ENCODE measurements at regions of chr3 and their contacts with region 1.

Region 1: DNA sequence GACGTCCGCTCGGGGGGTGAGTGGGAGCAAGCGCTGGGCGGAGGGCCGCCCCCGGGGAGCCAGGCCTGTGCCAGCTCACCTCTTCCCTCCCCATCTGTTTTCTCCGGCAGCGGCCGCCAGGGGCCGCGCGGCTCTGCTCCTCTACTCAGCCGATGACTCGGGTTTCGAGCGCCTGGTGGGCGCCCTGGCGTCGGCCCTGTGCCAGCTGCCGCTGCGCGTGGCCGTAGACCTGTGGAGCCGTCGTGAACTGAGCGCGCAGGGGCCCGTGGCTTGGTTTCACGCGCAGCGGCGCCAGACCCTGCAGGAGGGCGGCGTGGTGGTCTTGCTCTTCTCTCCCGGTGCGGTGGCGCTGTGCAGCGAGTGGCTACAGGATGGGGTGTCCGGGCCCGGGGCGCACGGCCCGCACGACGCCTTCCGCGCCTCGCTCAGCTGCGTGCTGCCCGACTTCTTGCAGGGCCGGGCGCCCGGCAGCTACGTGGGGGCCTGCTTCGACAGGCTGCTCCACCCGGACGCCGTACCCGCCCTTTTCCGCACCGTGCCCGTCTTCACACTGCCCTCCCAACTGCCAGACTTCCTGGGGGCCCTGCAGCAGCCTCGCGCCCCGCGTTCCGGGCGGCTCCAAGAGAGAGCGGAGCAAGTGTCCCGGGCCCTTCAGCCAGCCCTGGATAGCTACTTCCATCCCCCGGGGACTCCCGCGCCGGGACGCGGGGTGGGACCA is 632 bp upstream of the CRELD1 start:
- DNase-seq: peak; percentile 80 to 94 (median 86)
- ATAC-seq: peak; percentile 61 to 69
- H3K4me3 Mint-ChIP-seq: peak overlapping the region; percentile 94 to 99 (median 98)
- H3K27ac Mint-ChIP-seq: peak overlapping the region; percentile 96 to 100 (median 99)
- H3K4me1 Mint-ChIP-seq: peaks cover 24 to 53% (median 45%) of the 10 kb centered on the region in 4 donors
- H3K27me3 Mint-ChIP-seq: no peaks in the 10 kb centered on the region

Region 2: GRCh38 chr3:9792405-9793160 is 140.4 kb before region 1 on chr3 and contains the starts of genes ARPC4 and TADA3:
- POLR2A ChIA-PET with region 1: interaction called, 22 read pairs
- DNase-seq: peak; percentile 85 to 98 (median 89)
- ATAC-seq: peak; percentile 86 to 87
- H3K4me3 Mint-ChIP-seq: peak within 1 kb of the TSS; percentile 91 to 100 (median 96)
- H3K27ac Mint-ChIP-seq: peak within 1 kb of the TSS; percentile 95 to 100 (median 99)
- H3K4me1 Mint-ChIP-seq: peaks cover 36 to 78% (median 73%) of the 10 kb centered on the region in 4 donors
- H3K27me3 Mint-ChIP-seq: no peaks in the 10 kb centered on the region
- polyA plus RNA-seq, gene ARPC4: 201 to 229 (median 225) TPM
- polyA plus RNA-seq, gene TADA3: 38.2 to 51.2 (median 44.1) TPM

Region 3: GRCh38 chr3:9915254-9916141 is 17.5 kb before region 1 on chr3:
- POLR2A ChIA-PET with region 1: interaction called, 19 read pairs
- DNase-seq: peak in 5 of 10 donors; percentile 15 to 35 (median 26)
- ATAC-seq: peak; percentile 57 to 70
- H3K4me3 Mint-ChIP-seq: peak overlapping the region; percentile 67 to 88 (median 80)
- H3K27ac Mint-ChIP-seq: peak overlapping the region in 2 of 10 donors; percentile 18 to 62
- H3K4me1 Mint-ChIP-seq: peaks cover 3 to 23% (median 18%) of the 10 kb centered on the region in 4 donors
- H3K27me3 Mint-ChIP-seq: peaks cover 2 to 16% (median 4%) of the 10 kb centered on the region in 5 donors

Region 4: DNA sequence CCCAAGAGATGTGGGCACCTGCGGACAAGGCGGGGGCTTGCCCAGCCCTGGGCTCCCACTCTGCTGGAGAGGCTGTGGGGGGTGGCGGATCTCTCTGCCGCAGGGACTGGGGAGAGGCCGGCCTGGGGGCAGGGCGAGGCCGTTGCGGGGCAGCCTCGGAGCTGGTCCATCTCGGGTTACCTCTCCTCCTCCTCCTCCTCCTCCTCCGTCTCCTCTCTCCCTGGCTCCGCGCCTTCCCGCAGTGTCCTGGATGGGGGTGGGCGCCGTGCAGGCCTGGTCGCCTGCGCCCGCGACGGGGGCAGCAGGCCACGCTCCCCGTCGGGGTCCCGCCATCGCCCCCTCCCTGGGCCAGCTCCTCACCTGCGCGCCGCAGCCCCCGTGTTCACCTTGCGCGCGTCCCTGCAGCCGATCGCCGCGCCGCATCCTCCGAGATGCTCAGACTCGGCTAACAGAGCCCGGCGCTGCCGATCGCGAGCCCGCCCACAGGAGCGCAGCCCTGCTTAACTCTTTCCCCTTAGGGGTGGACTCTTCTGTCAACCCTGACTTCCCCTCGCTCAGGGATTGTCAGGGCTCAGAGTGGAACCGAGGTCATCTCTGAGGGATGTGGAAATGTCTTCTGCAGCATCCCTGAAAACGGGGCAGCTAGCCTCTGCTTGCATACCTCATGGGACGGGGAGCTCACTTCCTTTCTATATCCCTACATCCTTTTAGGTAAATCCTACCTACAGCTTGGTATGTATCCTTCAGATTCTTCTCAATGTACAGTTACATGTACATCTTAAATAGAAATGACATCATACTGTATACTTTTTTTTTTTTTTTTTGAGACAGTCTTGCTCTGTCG is 19.2 kb after region 1 on chr3 and contains the start of gene PRRT3:
- POLR2A ChIA-PET with region 1: interaction called, 73 read pairs
- DNase-seq: peak in 9 of 10 donors; percentile 38 to 74 (median 57)
- ATAC-seq: peak; percentile 93 to 97
- H3K4me3 Mint-ChIP-seq: peak within 1 kb of the TSS; percentile 77 to 91 (median 88)
- H3K27ac Mint-ChIP-seq: peak within 1 kb of the TSS in 8 of 10 donors; percentile 18 to 94 (median 63)
- H3K4me1 Mint-ChIP-seq: peaks cover 6 to 20% (median 15%) of the 10 kb centered on the region in 4 donors
- H3K27me3 Mint-ChIP-seq: no peaks in the 10 kb centered on the region
- polyA plus RNA-seq, gene PRRT3: 2.2 to 4.4 (median 3.1) TPM

Region 5: DNA sequence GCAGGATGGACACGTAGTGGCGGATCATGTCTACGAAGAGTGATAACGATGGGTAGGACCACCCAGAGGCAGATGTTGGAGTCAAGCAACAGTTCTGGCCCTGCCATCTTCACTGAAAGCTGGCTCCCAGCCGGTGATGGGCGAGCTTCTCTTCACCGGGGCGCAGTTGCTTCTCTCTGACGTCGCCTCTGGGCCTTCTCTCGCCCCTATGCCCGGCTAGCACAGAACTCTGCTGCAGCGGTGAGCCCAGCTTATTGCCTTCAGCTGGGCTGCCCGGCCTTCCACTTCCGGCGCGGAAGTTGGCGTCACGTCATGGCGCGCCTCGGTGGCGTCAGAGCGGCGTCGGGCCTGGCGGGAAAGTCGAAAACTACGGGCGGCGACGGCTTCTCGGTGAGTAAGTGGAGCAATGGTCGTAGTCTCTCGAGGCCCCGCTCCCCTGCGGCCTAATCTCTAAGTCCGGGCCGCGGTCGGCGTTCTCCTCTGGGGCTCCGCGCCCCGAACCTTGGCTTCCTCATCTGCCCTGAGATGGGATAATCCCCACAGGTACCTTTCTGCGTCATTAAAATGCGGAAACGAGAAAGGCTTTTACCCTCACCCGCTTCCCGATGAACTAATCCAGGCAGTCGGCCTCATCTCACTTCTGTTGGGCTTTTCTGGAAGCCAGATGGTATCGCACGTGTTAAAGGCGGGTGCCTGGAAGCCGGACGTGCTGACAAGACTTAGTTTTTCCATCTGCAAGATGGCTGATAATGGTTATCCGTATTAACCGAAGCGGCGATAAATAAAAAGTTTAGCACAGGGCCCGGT is 93.3 kb after region 1 on chr3 and contains the start of gene FANCD2:
- POLR2A ChIA-PET with region 1: interaction called, 10 read pairs
- DNase-seq: peak; percentile 83 to 98 (median 92)
- ATAC-seq: peak; percentile 94 to 95
- H3K4me3 Mint-ChIP-seq: peak within 1 kb of the TSS; percentile 93 to 98 (median 96)
- H3K27ac Mint-ChIP-seq: peak within 1 kb of the TSS; percentile 89 to 98 (median 97)
- H3K4me1 Mint-ChIP-seq: peaks cover 5 to 38% (median 32%) of the 10 kb centered on the region in 4 donors
- H3K27me3 Mint-ChIP-seq: no peaks in the 10 kb centered on the region
- polyA plus RNA-seq, gene FANCD2: 3.9 to 5.6 (median 4.7) TPM

Region 6: GRCh38 chr3:10192953-10193691 is 260.1 kb after region 1 on chr3:
- POLR2A ChIA-PET with region 1: interaction called, 14 read pairs
- DNase-seq: peak; percentile 30 to 83 (median 52)
- ATAC-seq: peak in 1 of 2 donors; percentile 26
- H3K4me3 Mint-ChIP-seq: peak overlapping the region; percentile 74 to 91 (median 83)
- H3K27ac Mint-ChIP-seq: peak overlapping the region; percentile 95 to 99 (median 98)
- H3K4me1 Mint-ChIP-seq: peaks cover 53 to 89% (median 79%) of the 10 kb centered on the region in 4 donors
- H3K27me3 Mint-ChIP-seq: no peaks in the 10 kb centered on the region

Measured in naive thymus-derived CD8-positive, alpha-beta T cell (primary cell).